Calu3 (cell line): ENCODE measurements at regions of chrX and their contacts with region 1.

Region 1: DNA sequence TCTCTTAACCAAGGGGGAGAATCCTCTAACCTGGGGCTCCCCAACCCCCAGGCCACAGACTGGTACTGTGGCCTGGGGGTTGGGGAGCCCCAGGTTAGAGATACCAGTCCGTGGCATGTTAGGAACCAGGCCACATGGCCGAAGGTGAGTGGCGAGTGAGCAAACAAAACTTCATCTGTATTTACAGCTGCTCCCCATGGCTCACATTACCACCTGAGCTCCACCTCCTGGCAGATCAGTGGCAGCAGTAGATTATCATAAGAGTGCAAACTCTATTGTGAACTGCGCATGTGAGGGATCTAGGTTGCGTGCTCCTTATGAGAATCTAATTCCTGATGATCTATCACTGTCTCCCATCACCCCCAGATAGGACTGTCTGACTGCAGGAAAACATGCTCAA is 957.2 kb upstream of the PRKX start:
- DNase-seq: peak; percentile 32
- H3K4me3 Mint-ChIP-seq: no peak overlapping the region
- H3K27ac Mint-ChIP-seq: no peak overlapping the region
- H3K4me1 Mint-ChIP-seq: peaks cover 17% of the 10 kb centered on the region
- H3K27me3 Mint-ChIP-seq: no peaks in the 10 kb centered on the region
- CTCF ChIP-seq: no peak

Region 2: DNA sequence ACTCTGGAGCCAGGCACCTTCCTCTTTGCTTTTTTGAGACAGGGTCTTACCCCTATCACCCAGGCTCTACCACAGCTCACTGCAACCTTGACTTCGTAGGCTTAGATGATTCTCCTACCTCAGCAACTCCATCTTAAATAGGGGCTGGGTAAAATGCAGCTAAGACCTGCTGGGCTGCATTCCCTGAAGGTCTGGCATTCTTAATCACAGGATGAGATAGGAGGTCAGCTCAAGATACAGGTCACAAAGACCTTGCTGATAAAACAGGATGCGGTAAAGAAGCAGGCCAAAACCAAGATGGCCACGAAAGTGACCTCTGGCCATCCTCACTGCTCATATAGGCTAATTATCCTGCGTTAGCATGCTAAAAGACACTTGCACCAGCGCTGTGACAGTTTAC is 186.3 kb before region 1 on chrX:
- CTCF ChIA-PET with region 1: no interaction called
- intact Hi-C with region 1: no loop called
- DNase-seq: no peak
- H3K4me3 Mint-ChIP-seq: no peak overlapping the region
- H3K27ac Mint-ChIP-seq: no peak overlapping the region
- H3K4me1 Mint-ChIP-seq: peaks cover 8% of the 10 kb centered on the region
- H3K27me3 Mint-ChIP-seq: no peaks in the 10 kb centered on the region
- CTCF ChIP-seq: no peak

Region 3: GRCh38 chrX:4547213-4547836 is 123.3 kb before region 1 on chrX:
- CTCF ChIA-PET with region 1: interaction called, 3 read pairs
- intact Hi-C with region 1: loop called (anchors 1 kb)
- DNase-seq: peak; percentile 41
- H3K4me3 Mint-ChIP-seq: no peak overlapping the region
- H3K27ac Mint-ChIP-seq: no peak overlapping the region
- H3K4me1 Mint-ChIP-seq: peaks cover 6% of the 10 kb centered on the region
- H3K27me3 Mint-ChIP-seq: no peaks in the 10 kb centered on the region
- CTCF ChIP-seq: peak; percentile 82

Region 4: DNA sequence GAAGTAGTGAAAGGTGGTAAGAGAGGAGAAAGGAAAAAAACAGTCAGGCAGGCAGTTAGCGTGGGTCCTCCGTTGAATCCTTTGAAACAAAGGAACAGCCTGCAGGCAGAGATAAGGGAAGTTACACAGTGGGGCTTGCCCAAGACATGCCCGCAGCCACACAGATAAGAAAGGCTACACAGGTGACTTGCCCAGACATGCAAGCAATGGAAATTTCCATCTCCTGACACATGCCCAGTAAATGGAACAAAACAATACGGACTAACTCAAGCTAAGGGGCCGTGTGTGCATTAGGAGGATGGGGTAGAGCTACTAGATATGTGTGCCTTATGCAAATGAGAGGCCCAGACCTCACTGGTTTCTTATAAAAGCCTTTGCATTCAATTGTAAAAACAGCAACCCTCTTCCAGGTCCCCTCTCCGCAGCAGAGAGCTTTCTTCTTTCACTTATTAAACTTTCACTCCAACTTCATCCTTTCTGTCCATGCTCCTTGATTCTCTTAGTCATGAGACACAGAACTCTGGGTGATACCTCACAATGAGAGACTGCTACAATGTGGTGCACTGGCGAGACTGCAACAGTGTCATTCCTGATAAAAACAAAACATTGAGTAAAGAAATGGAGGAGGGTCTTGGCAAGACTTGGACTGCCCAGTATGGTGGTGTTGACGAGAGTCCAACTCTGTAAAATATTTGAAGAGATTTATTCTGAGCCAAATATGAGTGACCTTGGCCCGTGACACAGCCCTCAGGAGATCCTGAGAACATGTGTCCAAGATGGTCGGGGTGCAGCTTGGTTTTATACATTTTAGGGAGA is 40.2 kb after region 1 on chrX:
- CTCF ChIA-PET with region 1: no interaction called
- intact Hi-C with region 1: loop called (anchors 5 kb)
- DNase-seq: peak; percentile 51
- H3K4me3 Mint-ChIP-seq: peak overlapping the region; percentile 17
- H3K27ac Mint-ChIP-seq: peak overlapping the region; percentile 77
- H3K4me1 Mint-ChIP-seq: peaks cover 27% of the 10 kb centered on the region
- H3K27me3 Mint-ChIP-seq: no peaks in the 10 kb centered on the region
- CTCF ChIP-seq: no peak

Region 5: GRCh38 chrX:4994855-4995254 is 324.2 kb after region 1 on chrX:
- CTCF ChIA-PET with region 1: no interaction called
- intact Hi-C with region 1: no loop called
- DNase-seq: no peak
- H3K4me3 Mint-ChIP-seq: no peak overlapping the region
- H3K27ac Mint-ChIP-seq: no peak overlapping the region
- H3K4me1 Mint-ChIP-seq: no peaks in the 10 kb centered on the region
- H3K27me3 Mint-ChIP-seq: no peaks in the 10 kb centered on the region
- CTCF ChIP-seq: no peak

Region 6: GRCh38 chrX:5051831-5052491 is 381.3 kb after region 1 on chrX:
- CTCF ChIA-PET with region 1: no interaction called
- intact Hi-C with region 1: loop called (anchors 5 kb)
- DNase-seq: peak; percentile 80
- H3K4me3 Mint-ChIP-seq: peak overlapping the region; percentile 36
- H3K27ac Mint-ChIP-seq: peak overlapping the region; percentile 92
- H3K4me1 Mint-ChIP-seq: peaks cover 18% of the 10 kb centered on the region
- H3K27me3 Mint-ChIP-seq: no peaks in the 10 kb centered on the region
- CTCF ChIP-seq: no peak